PC-9 (cell line): ENCODE measurements at regions of chr7 and their contacts with region 1.

Region 1: GRCh38 chr7:100896732-100897608 is 1.3 kb upstream of the ACHE start:
- DNase-seq: peak in 1 of 2 experiments; percentile 49
- H3K4me3 ChIP-seq: no peak overlapping the region
- H3K27ac ChIP-seq: no peak overlapping the region
- H3K4me1 ChIP-seq: 0 out of 2 replicates have a peak, but pooled peaks cover under 1% of the 10 kb centered on the region
- H3K27me3 ChIP-seq: peaks cover 11% of the 10 kb centered on the region; the same call in 1 of the 2 replicates
- CTCF ChIP-seq: peak; percentile 74

Region 2: DNA sequence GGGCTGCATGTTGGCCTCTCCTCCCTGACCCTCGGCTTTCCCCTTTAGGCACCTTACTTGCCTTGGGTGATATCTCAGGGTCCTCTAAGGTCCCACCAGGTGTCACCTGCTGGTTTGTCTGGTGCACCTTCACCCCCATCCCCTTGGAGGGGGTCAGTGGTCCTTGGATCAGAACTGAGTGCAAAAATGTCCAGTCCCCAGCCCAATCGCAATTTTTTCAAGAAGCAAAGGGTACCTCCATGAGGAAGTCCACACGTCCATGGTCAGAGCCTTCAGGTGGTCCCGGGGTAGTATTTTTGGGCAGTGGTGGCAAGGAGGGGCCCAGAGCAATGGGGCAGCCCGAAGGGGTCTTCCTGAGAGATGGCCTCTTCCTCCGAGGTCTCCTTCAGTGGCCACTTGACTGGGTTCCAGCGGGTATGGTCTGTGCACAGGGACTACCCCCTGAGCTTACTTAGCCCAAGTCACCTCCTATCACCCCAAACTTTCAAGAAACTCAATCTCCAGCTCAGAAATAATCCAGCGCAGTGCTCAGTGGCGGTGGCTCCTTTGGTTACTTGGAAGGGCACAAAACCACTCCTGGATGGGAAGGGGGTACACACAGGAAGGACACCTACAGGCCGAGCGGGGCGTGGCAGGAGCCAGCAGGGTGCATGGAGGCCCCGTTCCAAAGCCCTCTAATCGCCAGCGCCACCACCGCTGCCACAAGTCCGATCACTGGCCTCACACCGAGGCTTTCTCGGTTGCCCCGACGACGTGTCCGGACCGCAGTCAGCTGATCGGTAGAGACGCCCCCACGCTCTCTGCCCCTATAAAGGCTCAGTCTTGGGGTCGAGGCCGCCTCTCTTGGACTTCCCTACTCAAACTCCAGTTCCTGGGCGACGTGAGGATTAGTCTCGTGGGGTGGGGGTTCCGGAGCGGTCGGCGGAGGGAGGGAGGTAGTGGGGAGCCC is 327.8 kb before region 1 on chr7:
- CTCF ChIA-PET with region 1: no interaction called
- POLR2A ChIA-PET with region 1: interaction called, 18 read pairs
- intact Hi-C with region 1: no loop called
- DNase-seq: no peak
- H3K4me3 ChIP-seq: no peak overlapping the region
- H3K27ac ChIP-seq: no peak overlapping the region
- H3K4me1 ChIP-seq: no peaks in the 10 kb centered on the region
- H3K27me3 ChIP-seq: no peaks in the 10 kb centered on the region
- CTCF ChIP-seq: no peak

Region 3: GRCh38 chr7:100785878-100786277 is 111.1 kb before region 1 on chr7:
- CTCF ChIA-PET with region 1: no interaction called
- POLR2A ChIA-PET with region 1: no interaction called
- intact Hi-C with region 1: no loop called
- DNase-seq: no peak
- H3K4me3 ChIP-seq: no peak overlapping the region
- H3K27ac ChIP-seq: no peak overlapping the region
- H3K4me1 ChIP-seq: no peaks in the 10 kb centered on the region
- H3K27me3 ChIP-seq: no peaks in the 10 kb centered on the region
- CTCF ChIP-seq: no peak

Region 4: DNA sequence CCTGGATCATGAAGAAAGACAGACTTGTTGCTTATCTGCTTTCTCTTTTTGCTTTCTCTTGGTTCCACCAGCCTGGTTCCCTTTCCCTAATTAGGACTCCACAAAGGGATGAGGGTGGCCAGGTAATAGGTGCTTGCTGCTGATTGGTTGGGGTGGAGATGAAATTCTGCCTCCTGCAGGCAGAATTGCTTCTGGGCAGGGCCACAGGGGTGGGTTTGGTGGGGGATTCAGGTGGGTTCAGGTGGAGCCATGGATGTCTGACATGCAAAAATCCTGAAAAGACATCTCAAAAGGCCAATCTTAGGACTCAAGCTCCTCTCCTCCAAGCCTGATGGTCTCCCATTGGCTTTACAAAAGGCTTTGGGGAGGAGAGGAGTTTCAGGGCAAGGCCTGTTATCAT is 24.1 kb after region 1 on chr7:
- CTCF ChIA-PET with region 1: no interaction called
- POLR2A ChIA-PET with region 1: no interaction called
- intact Hi-C with region 1: no loop called
- DNase-seq: no peak
- H3K4me3 ChIP-seq: no peak overlapping the region
- H3K27ac ChIP-seq: no peak overlapping the region
- H3K4me1 ChIP-seq: no peaks in the 10 kb centered on the region
- H3K27me3 ChIP-seq: no peaks in the 10 kb centered on the region
- CTCF ChIP-seq: no peak

Region 5: DNA sequence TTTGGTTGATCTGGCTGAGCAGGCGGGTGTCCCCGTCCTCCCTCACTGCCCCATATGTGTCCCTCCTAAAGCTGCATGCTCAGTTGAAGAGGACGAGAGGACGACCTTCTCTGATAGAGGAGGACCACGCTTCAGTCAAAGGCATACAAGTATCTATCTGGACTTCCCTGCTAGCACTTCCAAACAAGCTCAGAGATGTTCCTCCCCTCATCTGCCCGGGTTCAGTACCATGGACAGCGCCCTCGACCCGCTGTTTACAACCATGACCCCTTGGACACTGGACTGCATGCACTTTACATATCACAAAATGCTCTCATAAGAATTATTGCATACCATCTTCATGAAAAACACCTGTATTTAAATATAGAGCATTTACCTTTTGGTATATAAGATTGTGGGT is 161.4 kb after region 1 on chr7:
- CTCF ChIA-PET with region 1: interaction called, 3 read pairs
- POLR2A ChIA-PET with region 1: no interaction called
- intact Hi-C with region 1: loop called (anchors 1 kb)
- DNase-seq: peak in 1 of 2 experiments; percentile 58
- H3K4me3 ChIP-seq: no peak overlapping the region
- H3K27ac ChIP-seq: no peak overlapping the region
- H3K4me1 ChIP-seq: no peaks in the 10 kb centered on the region
- H3K27me3 ChIP-seq: peaks cover 61% of the 10 kb centered on the region
- CTCF ChIP-seq: no peak

Region 6: DNA sequence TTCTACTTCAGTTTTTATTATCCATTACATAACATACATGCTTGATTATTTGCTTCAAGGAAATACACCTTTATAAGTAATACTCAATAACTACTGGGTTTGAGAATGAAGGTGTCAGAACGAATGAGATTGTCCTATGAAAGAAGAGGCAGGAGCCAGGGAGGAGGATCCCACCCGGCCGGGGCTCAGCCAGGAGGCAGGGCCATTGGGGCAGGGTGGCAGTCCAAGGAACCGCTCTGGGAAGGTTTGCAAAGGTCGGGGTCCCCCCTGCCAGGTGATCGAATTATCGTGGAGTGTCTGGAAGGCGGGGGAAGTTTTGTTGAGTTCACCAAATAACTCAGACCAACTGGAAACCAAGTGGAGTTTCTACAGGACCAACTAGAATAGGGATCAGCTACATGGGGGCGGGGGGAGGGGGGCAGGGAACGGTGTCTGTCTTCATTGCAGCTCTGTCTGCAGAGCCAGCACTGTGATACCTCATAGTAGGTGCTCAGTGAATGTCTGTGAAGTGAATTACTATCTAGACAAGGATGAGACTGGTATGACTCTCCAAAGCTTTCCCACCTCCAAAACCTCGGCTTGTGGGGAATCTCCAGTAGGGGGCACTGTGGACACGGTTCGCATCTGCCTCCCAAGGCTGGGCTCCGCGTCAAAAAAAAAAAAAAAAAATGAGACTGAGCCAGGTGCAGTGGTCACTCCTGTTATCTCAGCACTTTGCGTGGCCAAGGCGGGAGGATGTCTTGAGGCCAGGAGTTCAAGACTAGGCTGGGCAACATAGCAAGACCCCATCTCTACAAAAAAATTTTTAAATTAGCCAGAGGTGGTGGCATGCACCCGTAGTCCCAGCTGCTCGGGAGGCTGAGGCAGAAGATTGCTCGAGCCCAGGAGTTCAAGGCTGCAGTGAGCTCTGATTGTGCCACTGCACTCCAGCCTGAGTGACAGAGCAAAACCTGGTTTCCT is 197.7 kb after region 1 on chr7:
- CTCF ChIA-PET with region 1: no interaction called
- POLR2A ChIA-PET with region 1: no interaction called
- intact Hi-C with region 1: no loop called
- DNase-seq: peak in 1 of 2 experiments; percentile 58
- H3K4me3 ChIP-seq: no peak overlapping the region
- H3K27ac ChIP-seq: no peak overlapping the region
- H3K4me1 ChIP-seq: peaks cover 8% of the 10 kb centered on the region
- H3K27me3 ChIP-seq: no peaks in the 10 kb centered on the region
- CTCF ChIP-seq: peak; percentile 74